Naive thymus-derived CD4-positive, alpha-beta T cell (primary cell): ENCODE measurements at regions of chr12 and their contacts with region 1.

Region 1: DNA sequence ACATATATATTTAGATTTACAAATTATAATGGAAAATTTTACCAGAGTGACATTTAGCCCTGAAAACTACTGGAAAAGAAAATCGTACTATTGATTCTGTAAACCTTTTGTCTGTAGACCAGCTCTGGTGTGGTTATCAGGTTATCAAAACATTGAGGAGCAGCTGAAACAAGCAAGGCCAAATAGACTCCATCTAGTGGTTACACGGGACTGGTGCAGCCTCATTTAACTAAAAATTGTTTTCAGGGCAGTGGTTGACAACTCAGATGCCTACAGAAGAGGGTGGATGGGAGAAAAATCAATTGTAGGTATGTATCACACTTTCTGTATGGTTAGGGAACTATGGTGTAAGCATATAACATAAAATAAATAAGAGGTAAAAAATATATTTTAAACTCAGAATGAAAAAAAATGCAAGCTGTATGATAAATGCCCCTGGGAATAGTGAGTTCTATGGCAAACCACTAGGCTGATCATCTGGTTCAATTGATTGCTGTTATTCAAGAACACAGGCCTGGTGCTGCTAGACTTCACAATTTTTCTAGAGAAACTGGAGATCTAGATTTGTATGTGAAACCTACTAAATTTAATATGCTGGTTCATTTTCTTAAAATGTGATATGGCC is 51.2 kb downstream of the ACSS3 start:
- DNase-seq: no peak
- ATAC-seq: no peak
- H3K4me3 ChIP-seq: no peak overlapping the region
- H3K4me3 Mint-ChIP-seq: no peak overlapping the region
- H3K27ac ChIP-seq: no peak overlapping the region
- H3K27ac Mint-ChIP-seq: no peak overlapping the region
- H3K4me1 ChIP-seq: no peaks in the 10 kb centered on the region
- H3K4me1 Mint-ChIP-seq: no peaks in the 10 kb centered on the region
- H3K27me3 ChIP-seq: no peaks in the 10 kb centered on the region
- H3K27me3 Mint-ChIP-seq: no peaks in the 10 kb centered on the region

Region 2: DNA sequence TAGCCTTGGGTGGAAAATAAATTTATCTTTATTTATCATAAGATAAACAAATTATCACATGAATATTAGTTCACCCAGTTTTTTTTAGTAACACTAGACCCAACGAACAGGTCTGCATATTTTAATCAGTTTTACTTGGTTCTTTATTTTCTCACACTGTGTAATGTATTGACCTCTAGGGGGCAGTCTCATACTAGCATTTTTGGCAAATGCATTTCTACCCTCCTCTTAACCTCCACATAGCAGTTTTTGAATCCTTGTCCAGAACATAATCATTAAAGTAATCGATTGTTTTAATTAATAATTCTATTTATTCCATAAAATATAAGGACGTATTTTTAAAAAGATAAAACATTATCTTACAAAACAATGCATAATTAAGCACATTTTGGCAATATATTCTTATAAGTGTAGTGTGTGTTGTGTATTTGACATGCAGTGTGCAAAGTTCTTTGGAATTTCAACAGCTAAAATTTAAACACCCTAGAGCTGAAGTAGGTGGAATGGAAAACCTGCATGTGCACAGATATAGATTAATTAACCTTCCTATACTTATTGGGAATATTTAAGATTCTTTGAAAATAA is 716.6 kb before region 1 on chr12:
- CTCF ChIA-PET with region 1: no interaction called
- POLR2A ChIA-PET with region 1: no interaction called
- intact Hi-C with region 1: loop called in 1 of 2 experiments (anchors 2 kb)
- DNase-seq: no peak
- ATAC-seq: no peak
- H3K4me3 ChIP-seq: no peak overlapping the region
- H3K4me3 Mint-ChIP-seq: no peak overlapping the region
- H3K27ac ChIP-seq: no peak overlapping the region
- H3K27ac Mint-ChIP-seq: no peak overlapping the region
- H3K4me1 ChIP-seq: no peaks in the 10 kb centered on the region
- H3K4me1 Mint-ChIP-seq: no peaks in the 10 kb centered on the region
- H3K27me3 ChIP-seq: no peaks in the 10 kb centered on the region
- H3K27me3 Mint-ChIP-seq: no peaks in the 10 kb centered on the region

Region 3: GRCh38 chr12:81468206-81468605 is 339.2 kb after region 1 on chr12:
- CTCF ChIA-PET with region 1: no interaction called
- POLR2A ChIA-PET with region 1: no interaction called
- intact Hi-C with region 1: no loop called
- DNase-seq: no peak
- ATAC-seq: no peak
- H3K4me3 ChIP-seq: no peak overlapping the region
- H3K4me3 Mint-ChIP-seq: no peak overlapping the region
- H3K27ac ChIP-seq: no peak overlapping the region
- H3K27ac Mint-ChIP-seq: no peak overlapping the region
- H3K4me1 ChIP-seq: no peaks in the 10 kb centered on the region
- H3K4me1 Mint-ChIP-seq: no peaks in the 10 kb centered on the region
- H3K27me3 ChIP-seq: no peaks in the 10 kb centered on the region
- H3K27me3 Mint-ChIP-seq: no peaks in the 10 kb centered on the region